Transverse colon (tissue), 4 donors: ENCODE measurements at regions of chr5 and their contacts with region 1.

Region 1: DNA sequence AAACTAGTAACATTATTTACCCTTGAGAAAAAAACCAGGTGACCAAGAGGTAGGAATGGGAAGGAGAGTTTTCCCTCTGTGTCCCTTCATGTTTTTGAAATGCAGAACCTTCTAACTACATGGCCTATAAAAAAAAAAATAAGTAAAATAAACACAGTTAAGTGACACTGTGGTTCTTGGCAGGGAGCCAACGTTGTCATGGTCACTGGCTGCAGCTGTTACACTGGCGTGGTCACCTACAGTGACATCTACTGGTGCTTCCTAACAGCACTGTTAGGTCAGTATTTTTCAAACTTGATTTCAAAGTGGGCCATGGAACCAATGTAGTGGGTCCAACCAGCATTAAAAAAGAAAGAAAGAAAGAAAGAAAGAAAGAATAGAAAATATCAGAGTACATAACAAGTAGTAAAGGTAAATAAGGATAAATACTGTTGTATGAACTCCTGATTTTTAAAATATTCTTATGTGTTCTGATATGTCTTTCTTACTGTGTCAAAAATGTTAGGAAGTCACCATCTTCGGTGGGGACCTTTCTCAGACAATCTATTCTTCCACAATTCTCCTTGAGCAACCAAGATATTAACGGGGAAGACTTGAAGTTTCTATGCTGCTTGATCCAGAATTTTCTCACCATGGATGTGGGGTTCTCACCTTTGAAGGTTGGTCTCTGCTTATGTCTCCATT is 59.1 kb upstream of the PJA2 start:
- DNase-seq: peak; percentile 97
- H3K4me3 ChIP-seq: no peak overlapping the region
- H3K27ac ChIP-seq: no peak overlapping the region
- H3K4me1 ChIP-seq: peaks cover 0 to 10% (median 5%) of the 10 kb centered on the region in 4 donors
- H3K27me3 ChIP-seq: no peaks in the 10 kb centered on the region
- CTCF ChIP-seq: peak; percentile 73 to 88 (median 78)
- EP300 ChIP-seq: no peak
- POLR2A ChIP-seq: no peak

Region 2: GRCh38 chr5:108919591-108920326 is 549.1 kb before region 1 on chr5:
- in situ Hi-C with region 1: loop called in 1 of 4 experiments (anchors 25 kb)
- intact Hi-C with region 1: no loop called
- DNase-seq: no peak
- H3K4me3 ChIP-seq: no peak overlapping the region
- H3K27ac ChIP-seq: no peak overlapping the region
- H3K4me1 ChIP-seq: peaks cover 0 to 6% (median 0%) of the 10 kb centered on the region in 4 donors
- H3K27me3 ChIP-seq: no peaks in the 10 kb centered on the region
- CTCF ChIP-seq: peak; percentile 14 to 36 (median 31)
- EP300 ChIP-seq: no peak
- POLR2A ChIP-seq: no peak